ENCODE measurements at regions of chr3 and their contacts with region 1.

Region 1: DNA sequence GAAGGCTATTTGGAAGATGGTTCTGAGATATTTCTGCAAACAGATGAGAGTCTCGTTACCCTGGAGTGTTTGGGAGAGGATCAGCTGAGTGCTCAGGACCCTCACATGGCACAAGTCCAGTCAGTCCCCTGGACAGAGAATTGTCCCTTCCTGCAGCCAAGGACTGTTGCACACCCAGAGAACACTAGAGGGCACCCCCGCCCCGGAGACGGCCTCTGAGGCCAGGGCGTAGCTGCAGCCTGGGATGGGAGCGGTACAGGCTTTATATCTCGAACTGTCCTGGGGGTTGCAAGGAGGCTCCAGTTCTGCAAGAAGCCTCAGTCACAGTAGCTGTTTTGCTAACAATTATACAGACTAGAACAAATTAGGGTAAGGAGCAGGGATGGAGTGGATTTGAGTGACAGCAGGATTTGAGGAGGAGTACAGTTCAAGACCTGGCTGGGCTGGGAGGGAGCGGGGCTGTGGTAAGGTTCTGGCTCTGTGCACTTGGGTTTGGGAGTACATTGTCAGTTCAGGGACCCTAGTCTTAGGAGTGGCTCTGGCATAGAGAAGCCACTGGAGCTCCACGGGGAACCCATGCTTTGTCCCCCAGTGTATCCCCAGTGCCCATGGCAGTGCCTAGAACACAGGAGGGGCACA is 67.6 kb upstream of the HACD2 start:
- DNase-seq: peak; percentile 71
- H3K4me3 ChIP-seq: no peak overlapping the region
- H3K27ac ChIP-seq: peak overlapping the region; percentile 77 to 79
- H3K4me1 ChIP-seq: peaks cover under 1% of the 10 kb centered on the region
- H3K27me3 ChIP-seq: no peaks in the 10 kb centered on the region
- CTCF ChIP-seq: peak; percentile 46 to 87 (median 82)
- POLR2A ChIP-seq: no peak

Region 2: GRCh38 chr3:123096731-123097130 is 555.7 kb before region 1 on chr3:
- intact Hi-C with region 1: no loop called
- DNase-seq: no peak
- H3K4me3 ChIP-seq: no peak overlapping the region
- H3K27ac ChIP-seq: no peak overlapping the region
- H3K4me1 ChIP-seq: no peaks in the 10 kb centered on the region
- H3K27me3 ChIP-seq: no peaks in the 10 kb centered on the region
- CTCF ChIP-seq: no peak
- POLR2A ChIP-seq: no peak

Region 3: GRCh38 chr3:123546133-123546755 is 106.2 kb before region 1 on chr3:
- intact Hi-C with region 1: no loop called
- DNase-seq: no peak
- H3K4me3 ChIP-seq: no peak overlapping the region
- H3K27ac ChIP-seq: no peak overlapping the region
- H3K4me1 ChIP-seq: no peaks in the 10 kb centered on the region
- H3K27me3 ChIP-seq: no peaks in the 10 kb centered on the region
- CTCF ChIP-seq: no peak
- POLR2A ChIP-seq: no peak

Region 4: GRCh38 chr3:123702720-123703119 is 50.3 kb after region 1 on chr3:
- intact Hi-C with region 1: loop called (anchors 2 kb)
- DNase-seq: no peak
- H3K4me3 ChIP-seq: no peak overlapping the region
- H3K27ac ChIP-seq: peak overlapping the region; percentile 12 to 76
- H3K4me1 ChIP-seq: no peaks in the 10 kb centered on the region
- H3K27me3 ChIP-seq: no peaks in the 10 kb centered on the region
- CTCF ChIP-seq: no peak
- POLR2A ChIP-seq: no peak

Region 5: GRCh38 chr3:123723522-123724168 is 71.2 kb after region 1 on chr3:
- intact Hi-C with region 1: loop called (anchors 2 kb)
- DNase-seq: peak; percentile 55
- H3K4me3 ChIP-seq: no peak overlapping the region
- H3K27ac ChIP-seq: peak overlapping the region in 1 of 2 donors; percentile 7
- H3K4me1 ChIP-seq: no peaks in the 10 kb centered on the region
- H3K27me3 ChIP-seq: no peaks in the 10 kb centered on the region
- CTCF ChIP-seq: peak; percentile 45 to 82 (median 74)
- POLR2A ChIP-seq: no peak

Region 6: GRCh38 chr3:123884203-123884831 is 231.9 kb after region 1 on chr3 and contains the start of gene MYLK:
- intact Hi-C with region 1: loop called (anchors 10 kb)
- DNase-seq: peak; percentile 63
- H3K4me3 ChIP-seq: peak within 1 kb of the TSS; percentile 35 to 41
- H3K27ac ChIP-seq: peak within 1 kb of the TSS in 1 of 2 donors; percentile 37
- H3K4me1 ChIP-seq: no peaks in the 10 kb centered on the region
- H3K27me3 ChIP-seq: no peaks in the 10 kb centered on the region
- CTCF ChIP-seq: no peak
- POLR2A ChIP-seq: no peak
- total RNA-seq, gene MYLK: 345 to 600 TPM

Region 7: GRCh38 chr3:124467980-124468902 is 815.8 kb after region 1 on chr3:
- intact Hi-C with region 1: loop called (anchors 5 kb)
- DNase-seq: peak; percentile 17
- H3K4me3 ChIP-seq: no peak overlapping the region
- H3K27ac ChIP-seq: no peak overlapping the region
- H3K4me1 ChIP-seq: no peaks in the 10 kb centered on the region
- H3K27me3 ChIP-seq: no peaks in the 10 kb centered on the region
- CTCF ChIP-seq: peak; percentile 86 to 90 (median 88)
- POLR2A ChIP-seq: no peak

Measured in prostate gland (tissue), 2 donors.